ENCODE measurements at regions of chr3 and their contacts with region 1.

Region 1: GRCh38 chr3:108090701-108091451 is at the start of gene CD47:
- DNase-seq: peak; percentile 86
- H3K4me3 ChIP-seq: peak within 1 kb of the TSS; percentile 83 to 99 (median 84)
- H3K27ac ChIP-seq: peak within 1 kb of the TSS; percentile 66
- H3K4me1 ChIP-seq: peaks cover 9% of the 10 kb centered on the region
- H3K27me3 ChIP-seq: no peaks in the 10 kb centered on the region
- CTCF ChIP-seq: no peak
- total RNA-seq, gene CD47: 65.0 to 68.5 TPM

Region 2: GRCh38 chr3:107927361-107928083 is 163.4 kb before region 1 on chr3:
- CTCF ChIA-PET with region 1: no interaction called
- dilution Hi-C with region 1: no loop called
- in situ Hi-C with region 1: no loop called
- intact Hi-C with region 1: loop called (anchors 1 kb)
- DNase-seq: peak; percentile 69
- H3K4me3 ChIP-seq: peak overlapping the region; percentile 47 to 67 (median 52)
- H3K27ac ChIP-seq: no peak overlapping the region
- H3K4me1 ChIP-seq: no peaks in the 10 kb centered on the region
- H3K27me3 ChIP-seq: peaks cover 2% of the 10 kb centered on the region
- CTCF ChIP-seq: peak; percentile 78 to 96

Region 3: DNA sequence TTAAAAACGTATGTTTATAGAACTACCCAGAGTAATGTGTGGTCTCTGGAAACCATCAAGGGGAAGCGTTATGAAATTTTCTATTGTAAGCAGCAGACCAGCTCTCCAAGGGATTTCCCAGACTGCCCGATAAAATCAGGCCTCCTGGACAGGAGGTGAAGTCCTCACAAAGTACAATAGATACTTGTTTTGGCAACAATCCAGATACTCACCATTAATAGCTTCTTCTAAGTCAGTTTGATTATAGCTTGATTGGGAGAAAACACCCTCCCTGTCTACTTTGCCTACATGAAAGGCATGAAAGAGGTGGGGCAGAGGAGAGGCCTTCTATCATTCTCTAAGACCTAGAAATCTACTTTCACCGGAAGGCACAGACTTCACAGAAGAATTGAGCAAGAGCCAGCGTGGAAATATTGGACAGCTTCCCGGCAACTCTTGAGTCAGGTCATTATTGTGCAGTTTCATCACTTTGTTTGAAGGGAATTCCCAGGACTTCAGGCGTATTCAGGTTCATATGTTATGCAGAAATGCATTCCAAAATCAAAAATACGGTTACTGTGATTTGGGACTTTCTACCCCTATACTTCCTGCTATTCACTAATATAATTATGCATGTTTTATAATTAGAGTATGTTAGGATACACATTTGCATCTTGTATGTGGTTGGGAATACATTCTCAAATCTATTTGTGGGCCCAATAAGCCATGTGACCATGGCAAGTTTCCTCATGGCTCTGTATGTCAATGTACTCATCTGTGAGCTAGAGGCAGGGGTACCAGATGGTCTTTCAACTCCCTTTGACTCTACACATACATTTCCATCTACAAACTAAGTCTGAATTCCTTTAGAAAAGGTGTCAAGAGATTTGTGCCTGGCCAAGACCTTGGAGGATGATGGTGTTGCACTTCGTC is 103.6 kb before region 1 on chr3:
- CTCF ChIA-PET with region 1: no interaction called
- dilution Hi-C with region 1: no loop called
- in situ Hi-C with region 1: no loop called
- intact Hi-C with region 1: loop called (anchors 5 kb)
- DNase-seq: peak; percentile 98
- H3K4me3 ChIP-seq: no peak overlapping the region
- H3K27ac ChIP-seq: peak overlapping the region; percentile 65
- H3K4me1 ChIP-seq: peaks cover 33% of the 10 kb centered on the region
- H3K27me3 ChIP-seq: no peaks in the 10 kb centered on the region
- CTCF ChIP-seq: no peak

Region 4: GRCh38 chr3:108053067-108053466 is 37.8 kb before region 1 on chr3:
- CTCF ChIA-PET with region 1: no interaction called
- dilution Hi-C with region 1: no loop called
- in situ Hi-C with region 1: no loop called
- intact Hi-C with region 1: no loop called
- DNase-seq: peak; percentile 18
- H3K4me3 ChIP-seq: no peak overlapping the region
- H3K27ac ChIP-seq: no peak overlapping the region
- H3K4me1 ChIP-seq: no peaks in the 10 kb centered on the region
- H3K27me3 ChIP-seq: no peaks in the 10 kb centered on the region
- CTCF ChIP-seq: no peak

Region 5: GRCh38 chr3:108130701-108131474 is 40.0 kb after region 1 on chr3:
- CTCF ChIA-PET with region 1: no interaction called
- dilution Hi-C with region 1: no loop called
- in situ Hi-C with region 1: no loop called
- intact Hi-C with region 1: loop called (anchors 1 kb)
- DNase-seq: peak; percentile 96
- H3K4me3 ChIP-seq: peak overlapping the region in 1 of 3 experiments; percentile 1
- H3K27ac ChIP-seq: peak overlapping the region; percentile 96
- H3K4me1 ChIP-seq: peaks cover 40% of the 10 kb centered on the region
- H3K27me3 ChIP-seq: no peaks in the 10 kb centered on the region
- CTCF ChIP-seq: no peak

Region 6: GRCh38 chr3:108406661-108407206 is 315.9 kb after region 1 on chr3:
- CTCF ChIA-PET with region 1: no interaction called
- dilution Hi-C with region 1: no loop called
- in situ Hi-C with region 1: no loop called
- intact Hi-C with region 1: loop called (anchors 1 kb)
- DNase-seq: peak; percentile 64
- H3K4me3 ChIP-seq: no peak overlapping the region
- H3K27ac ChIP-seq: no peak overlapping the region
- H3K4me1 ChIP-seq: no peaks in the 10 kb centered on the region
- H3K27me3 ChIP-seq: no peaks in the 10 kb centered on the region
- CTCF ChIP-seq: peak; percentile 86

Measured in mammary epithelial cell (primary cell).